ENCODE measurements at regions of chr2 and their contacts with region 1.

Region 1: DNA sequence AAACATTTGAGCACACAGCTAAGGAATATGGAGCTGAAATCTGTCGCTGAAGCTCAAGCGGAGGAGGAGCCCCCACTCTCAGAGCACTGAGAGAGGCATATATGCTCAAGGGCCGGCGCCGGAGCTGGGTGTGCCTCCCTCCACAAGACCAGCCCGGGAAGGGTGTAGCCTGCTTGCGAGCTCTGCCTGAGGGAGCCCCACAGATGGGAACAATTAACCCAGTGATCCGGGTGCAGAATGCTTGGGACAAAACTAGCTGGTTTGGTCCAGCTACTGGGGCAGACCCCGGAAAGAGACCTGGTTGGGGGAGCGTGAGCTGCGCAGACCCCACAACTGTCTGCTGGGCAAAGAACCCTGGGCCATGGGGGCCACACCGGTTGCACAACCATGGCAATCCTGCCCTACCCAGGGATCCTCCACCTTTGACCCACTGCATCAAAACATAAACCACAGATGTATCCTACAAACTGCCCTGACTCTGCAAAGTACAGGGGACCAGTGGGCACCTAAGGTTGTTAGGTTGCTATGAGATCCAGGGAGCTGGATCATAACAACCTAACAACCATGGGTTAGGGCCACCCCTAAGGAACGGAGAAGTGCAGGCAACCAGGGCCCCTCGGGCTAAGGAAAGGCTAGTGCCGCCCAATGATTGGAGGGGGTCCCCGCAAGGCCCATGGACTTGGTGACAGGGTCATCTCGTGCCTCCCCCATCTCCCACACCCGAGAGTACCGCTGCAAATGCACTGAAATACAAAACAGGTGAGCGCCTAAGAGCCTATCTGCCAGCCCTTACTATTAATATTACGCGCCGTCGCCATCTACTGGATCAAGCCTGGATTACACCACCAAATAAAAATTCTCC is 53.4 kb upstream of the SCN1A start:
- DNase-seq: peak in 1 of 2 experiments; percentile 81
- H3K4me3 ChIP-seq: no peak overlapping the region
- H3K27ac ChIP-seq: no peak overlapping the region
- H3K4me1 ChIP-seq: peaks cover 0 to 4% (median 0%) of the 10 kb centered on the region in 4 experiments; a peak in 2 of 7 replicates
- H3K27me3 ChIP-seq: no peaks in the 10 kb centered on the region
- CTCF ChIP-seq: peak in 2 of 3 experiments; percentile 50 to 54; a peak in 3 of 4 replicates
- EP300 ChIP-seq: no peak
- POLR2A ChIP-seq: no peak
- RAD21 ChIP-seq: peak; percentile 53 to 67

Region 2: DNA sequence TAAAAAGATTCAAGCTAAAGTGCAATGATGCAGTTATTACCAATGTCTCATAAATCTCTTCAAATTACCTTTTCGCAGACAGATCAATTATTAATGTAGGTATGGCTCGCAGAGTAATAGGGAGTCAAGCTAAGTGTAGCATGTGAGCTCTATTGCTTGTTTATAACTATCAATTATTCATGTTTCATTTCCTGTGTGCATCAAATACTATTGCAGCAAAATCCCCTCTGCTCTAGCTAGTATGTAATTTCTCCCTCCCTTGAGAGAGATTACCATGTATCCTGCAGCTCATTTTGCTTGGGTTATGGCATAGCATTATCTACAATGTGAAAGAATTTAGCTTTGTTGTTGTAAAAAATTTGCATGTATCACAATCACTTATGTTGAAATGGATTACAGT is 12.2 kb after region 1 on chr2:
- CTCF ChIA-PET with region 1: interaction called, 14 read pairs
- POLR2A ChIA-PET with region 1: no interaction called
- DNase-seq: no peak
- H3K4me3 ChIP-seq: no peak overlapping the region
- H3K27ac ChIP-seq: no peak overlapping the region
- H3K4me1 ChIP-seq: no peaks in the 10 kb centered on the region
- H3K27me3 ChIP-seq: no peaks in the 10 kb centered on the region
- CTCF ChIP-seq: no peak
- EP300 ChIP-seq: no peak
- POLR2A ChIP-seq: no peak
- RAD21 ChIP-seq: no peak

Region 3: DNA sequence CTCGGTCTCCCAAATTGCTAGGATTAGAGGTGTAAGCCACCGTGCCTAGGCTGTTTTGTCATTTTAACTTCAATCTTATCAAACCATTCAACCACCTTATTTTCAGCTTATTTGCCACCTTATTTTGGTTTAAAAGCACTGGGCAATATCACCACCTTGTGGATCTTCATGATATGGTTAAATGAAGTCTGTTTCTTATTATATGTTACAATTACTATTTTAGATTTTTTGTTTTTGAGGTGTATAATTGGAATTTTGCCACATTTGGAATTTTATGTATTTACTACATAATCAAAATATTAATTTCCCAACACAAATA is 238.4 kb after region 1 on chr2:
- CTCF ChIA-PET with region 1: interaction called, 13 read pairs
- POLR2A ChIA-PET with region 1: no interaction called
- DNase-seq: no peak
- H3K4me3 ChIP-seq: no peak overlapping the region
- H3K27ac ChIP-seq: no peak overlapping the region
- H3K4me1 ChIP-seq: no peaks in the 10 kb centered on the region
- H3K27me3 ChIP-seq: no peaks in the 10 kb centered on the region
- CTCF ChIP-seq: peak in 2 of 3 experiments; percentile 27 to 44; a peak in 2 of 4 replicates
- EP300 ChIP-seq: no peak
- POLR2A ChIP-seq: no peak
- RAD21 ChIP-seq: peak; percentile 65 to 77